ENCODE measurements at regions of chr14 and their contacts with region 1.

Region 1: DNA sequence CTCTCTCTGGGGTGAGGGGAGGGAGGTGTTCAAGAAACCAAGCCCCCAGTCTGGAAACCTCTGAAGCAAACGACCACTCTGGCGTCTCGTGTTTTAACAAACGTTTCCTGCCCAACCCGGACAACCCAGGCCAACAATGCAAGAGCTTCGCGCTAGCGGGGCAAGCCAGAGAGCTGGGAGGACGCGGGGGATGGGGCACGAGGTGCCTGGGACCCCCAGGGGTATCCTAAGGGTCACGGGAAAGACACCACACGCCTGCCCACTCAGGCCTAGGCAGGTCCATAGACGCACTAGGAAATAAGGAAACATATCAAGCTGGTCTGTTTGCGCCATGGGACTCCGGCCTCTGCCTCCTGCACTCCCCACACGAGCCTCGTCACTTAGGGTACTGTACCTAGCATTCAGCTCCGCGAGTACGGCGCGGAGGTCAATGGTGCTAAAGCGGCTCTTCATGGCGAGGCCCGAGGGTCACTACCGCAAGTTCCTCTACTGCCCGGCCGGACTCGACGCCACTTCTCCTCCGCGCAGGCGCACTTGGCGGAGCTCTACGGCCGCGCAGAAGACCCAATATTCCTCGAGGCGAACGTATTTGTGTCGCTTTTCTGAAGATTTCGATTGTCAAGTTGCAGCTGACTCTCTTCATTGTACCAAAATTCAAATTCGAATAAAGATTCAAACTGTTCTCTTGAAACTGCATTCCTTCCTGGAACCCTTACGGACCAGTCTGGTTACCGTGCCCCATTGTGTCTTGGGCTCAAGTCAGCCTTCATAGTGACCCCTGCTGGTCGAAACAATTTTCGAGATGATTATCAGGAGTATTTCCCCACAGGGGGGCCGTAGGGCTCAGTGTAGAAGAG is at the start of gene NEMF:
- DNase-seq: peak; percentile 49 to 92 (median 68)
- ATAC-seq: peak; percentile 75 to 83 (median 78)
- H3K4me3 ChIP-seq: peak within 1 kb of the TSS; percentile 79 to 96
- H3K4me3 Mint-ChIP-seq: peak within 1 kb of the TSS; percentile 98 to 100 (median 99)
- H3K27ac ChIP-seq: peak within 1 kb of the TSS; percentile 73
- H3K27ac Mint-ChIP-seq: peak within 1 kb of the TSS; percentile 96 to 97
- H3K4me1 ChIP-seq: peaks cover 11 to 19% of the 10 kb centered on the region in 2 experiments
- H3K4me1 Mint-ChIP-seq: peaks cover 43 to 55% (median 45%) of the 10 kb centered on the region in 3 donors
- H3K27me3 ChIP-seq: no peaks in the 10 kb centered on the region
- H3K27me3 Mint-ChIP-seq: no peaks in the 10 kb centered on the region
- total RNA-seq, gene NEMF: 73.0 to 106 (median 88.8) TPM

Region 2: GRCh38 chr14:49447540-49448107 is 404.9 kb before region 1 on chr14:
- CTCF ChIA-PET with region 1: no interaction called
- POLR2A ChIA-PET with region 1: no interaction called
- DNase-seq: no peak
- ATAC-seq: no peak
- H3K4me3 ChIP-seq: no peak overlapping the region
- H3K4me3 Mint-ChIP-seq: no peak overlapping the region
- H3K27ac ChIP-seq: no peak overlapping the region
- H3K27ac Mint-ChIP-seq: no peak overlapping the region
- H3K4me1 ChIP-seq: no peaks in the 10 kb centered on the region
- H3K4me1 Mint-ChIP-seq: no peaks in the 10 kb centered on the region
- H3K27me3 ChIP-seq: peaks cover 0 to 5% of the 10 kb centered on the region in 2 experiments
- H3K27me3 Mint-ChIP-seq: peaks cover 6 to 9% of the 10 kb centered on the region in 2 donors

Region 3: DNA sequence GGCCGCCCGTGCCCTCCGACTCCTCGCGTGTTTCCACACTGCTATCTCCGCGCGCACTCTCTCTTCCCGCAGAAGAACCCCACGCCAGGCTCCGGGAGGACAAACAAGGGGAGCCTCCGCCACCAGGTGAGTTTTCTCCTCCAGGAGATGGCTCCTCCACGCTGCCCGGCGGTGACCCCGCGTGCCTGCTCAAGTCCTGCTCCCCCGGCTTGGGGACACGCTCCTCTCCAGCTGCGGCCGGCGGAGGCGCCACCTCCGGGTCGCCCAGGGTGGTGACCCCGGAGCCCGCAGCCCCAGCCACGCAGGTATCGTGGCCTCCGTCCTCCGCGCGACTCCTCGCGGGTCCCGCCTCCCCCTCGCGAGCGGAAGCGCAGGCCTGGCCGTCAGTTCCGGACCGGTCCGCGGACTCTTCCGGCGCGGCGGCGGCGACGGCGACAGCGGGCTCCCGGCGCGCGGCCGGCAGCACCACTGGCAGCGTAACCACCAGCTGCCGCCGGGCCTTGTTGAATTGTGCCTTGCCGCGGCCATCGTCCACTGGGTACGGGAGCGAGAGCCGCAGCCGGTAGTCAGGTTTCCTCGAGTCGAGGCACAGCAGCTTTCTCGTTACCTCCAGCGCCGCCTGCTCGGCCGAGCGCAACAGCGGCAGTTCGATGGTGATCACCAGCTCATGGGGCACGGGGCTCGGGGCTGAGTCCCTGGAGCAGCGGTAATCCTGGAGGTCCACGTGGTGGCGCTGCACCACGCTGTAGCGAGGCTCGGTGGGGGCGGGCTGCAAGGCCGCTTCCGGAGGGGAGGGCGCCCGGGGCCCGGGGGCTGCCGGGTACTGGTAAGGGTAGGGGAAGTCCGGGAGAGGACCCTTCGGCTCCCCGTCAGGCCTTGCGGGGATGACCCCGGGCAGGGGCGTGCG is 218.6 kb before region 1 on chr14:
- CTCF ChIA-PET with region 1: interaction called in 1 of 2 experiments, 13 read pairs
- POLR2A ChIA-PET with region 1: interaction called, 3 read pairs
- DNase-seq: peak; percentile 83 to 96 (median 91)
- ATAC-seq: peak; percentile 84 to 88 (median 85)
- H3K4me3 ChIP-seq: peak overlapping the region; percentile 92 to 96
- H3K4me3 Mint-ChIP-seq: peak overlapping the region; percentile 95 to 99 (median 97)
- H3K27ac ChIP-seq: peak overlapping the region; percentile 98
- H3K27ac Mint-ChIP-seq: peak overlapping the region; percentile 92 to 94
- H3K4me1 ChIP-seq: peaks cover 4 to 41% of the 10 kb centered on the region in 2 experiments
- H3K4me1 Mint-ChIP-seq: peaks cover 48 to 68% (median 63%) of the 10 kb centered on the region in 3 donors
- H3K27me3 ChIP-seq: no peaks in the 10 kb centered on the region
- H3K27me3 Mint-ChIP-seq: no peaks in the 10 kb centered on the region

Region 4: DNA sequence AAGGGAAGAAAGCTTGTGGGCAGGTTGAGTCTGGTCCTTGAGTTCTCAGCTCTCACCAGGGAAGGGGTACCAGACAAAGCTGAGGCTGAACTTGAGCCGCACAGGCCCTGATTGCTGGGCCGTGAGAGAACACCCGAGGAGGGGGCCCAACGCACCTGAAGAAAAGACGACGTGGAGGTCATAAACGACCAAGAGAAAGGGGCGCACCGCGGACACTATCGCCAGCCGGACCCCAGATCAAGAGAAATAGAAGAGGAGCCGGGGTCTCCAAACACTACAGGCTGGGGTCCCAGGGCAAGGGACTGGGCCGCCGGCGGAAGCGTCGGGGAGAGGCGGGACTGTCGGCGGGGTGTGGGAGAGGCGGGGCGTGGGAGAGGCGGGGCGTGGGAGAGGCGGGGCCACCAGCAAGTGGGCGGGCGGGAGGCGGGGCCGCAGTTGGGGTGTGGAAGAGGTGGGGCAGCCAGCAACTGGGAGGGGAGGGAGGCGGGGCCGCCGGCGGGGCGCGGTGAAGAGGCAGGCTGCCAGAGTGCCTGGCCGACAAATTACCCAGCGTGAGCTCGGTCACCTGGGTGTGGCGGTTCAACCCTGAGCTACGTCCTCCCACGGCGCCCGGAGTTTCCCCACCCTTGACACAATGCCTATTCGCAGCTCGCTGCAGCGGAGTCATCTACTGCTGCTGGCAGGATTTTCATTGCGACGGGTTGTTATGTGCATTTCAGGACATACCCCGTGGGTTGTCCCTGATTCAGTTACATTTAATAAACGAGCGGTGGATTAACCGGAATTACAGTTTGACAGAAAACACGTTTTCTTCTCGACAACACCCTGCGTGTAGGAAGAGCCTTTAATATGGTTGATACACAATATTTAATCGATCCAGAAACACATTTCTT is 15.5 kb after region 1 on chr14:
- CTCF ChIA-PET with region 1: interaction called, 22 to 144 read pairs
- POLR2A ChIA-PET with region 1: interaction called, 13 to 33 read pairs
- DNase-seq: peak; percentile 91 to 98 (median 97)
- ATAC-seq: peak; percentile 89 to 94 (median 93)
- H3K4me3 ChIP-seq: peak overlapping the region; percentile 44 to 49
- H3K4me3 Mint-ChIP-seq: peak overlapping the region; percentile 84 to 87 (median 86)
- H3K27ac ChIP-seq: peak overlapping the region; percentile 85
- H3K27ac Mint-ChIP-seq: peak overlapping the region; percentile 97 to 98
- H3K4me1 ChIP-seq: peaks cover 21 to 35% of the 10 kb centered on the region in 2 experiments
- H3K4me1 Mint-ChIP-seq: peaks cover 12 to 28% (median 15%) of the 10 kb centered on the region in 3 donors
- H3K27me3 ChIP-seq: no peaks in the 10 kb centered on the region
- H3K27me3 Mint-ChIP-seq: no peaks in the 10 kb centered on the region

Region 5: DNA sequence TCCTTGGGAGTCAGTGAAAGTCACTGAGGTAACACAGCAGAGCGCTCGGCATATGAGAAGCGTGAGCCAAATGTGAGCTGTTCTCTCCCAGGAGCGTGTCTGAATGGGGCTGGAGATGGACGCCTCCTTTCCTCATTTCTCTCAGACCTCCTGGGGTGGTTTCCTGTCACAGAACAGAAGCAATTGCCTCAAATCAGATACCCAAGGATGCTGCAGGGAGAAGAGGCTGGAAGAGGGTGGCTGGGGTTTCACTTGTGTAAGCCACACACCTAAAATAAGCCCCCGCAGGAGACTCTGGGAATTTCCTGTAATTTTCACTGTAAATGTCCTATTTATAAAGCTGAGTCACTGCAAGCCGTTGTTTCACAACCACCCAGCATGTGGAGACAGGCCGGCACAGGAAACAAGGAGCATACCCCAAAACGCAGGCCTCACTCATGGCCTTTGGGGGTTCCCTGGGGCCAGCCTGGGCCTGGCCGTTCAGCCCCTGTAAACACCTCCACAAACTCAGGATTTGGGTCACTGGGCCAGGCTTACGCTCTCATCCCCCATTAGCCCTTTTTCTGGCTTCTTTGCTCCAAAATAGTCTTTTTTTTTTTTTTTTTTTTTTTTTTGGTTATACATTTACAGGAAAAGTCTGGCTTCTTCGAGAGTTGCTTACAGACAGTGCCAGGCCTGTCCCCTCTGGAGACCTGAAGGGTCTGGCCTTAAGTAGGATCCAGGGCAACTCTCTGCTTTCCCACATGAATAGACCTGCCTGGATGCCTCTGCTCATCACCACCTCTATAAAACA is 208.5 kb after region 1 on chr14:
- CTCF ChIA-PET with region 1: interaction called, 3 to 19 read pairs
- POLR2A ChIA-PET with region 1: interaction called in 1 of 2 experiments, 5 read pairs
- DNase-seq: peak in 9 of 35 experiments; percentile 11 to 66 (median 34)
- ATAC-seq: no peak
- H3K4me3 ChIP-seq: peak overlapping the region in 1 of 2 donors; percentile 41
- H3K4me3 Mint-ChIP-seq: peak overlapping the region; percentile 70 to 90 (median 88)
- H3K27ac ChIP-seq: peak overlapping the region; percentile 93
- H3K27ac Mint-ChIP-seq: peak overlapping the region; percentile 100
- H3K4me1 ChIP-seq: peaks cover 44 to 76% of the 10 kb centered on the region in 2 experiments
- H3K4me1 Mint-ChIP-seq: peaks cover 75 to 92% (median 82%) of the 10 kb centered on the region in 3 donors
- H3K27me3 ChIP-seq: no peaks in the 10 kb centered on the region
- H3K27me3 Mint-ChIP-seq: no peaks in the 10 kb centered on the region

Region 6: DNA sequence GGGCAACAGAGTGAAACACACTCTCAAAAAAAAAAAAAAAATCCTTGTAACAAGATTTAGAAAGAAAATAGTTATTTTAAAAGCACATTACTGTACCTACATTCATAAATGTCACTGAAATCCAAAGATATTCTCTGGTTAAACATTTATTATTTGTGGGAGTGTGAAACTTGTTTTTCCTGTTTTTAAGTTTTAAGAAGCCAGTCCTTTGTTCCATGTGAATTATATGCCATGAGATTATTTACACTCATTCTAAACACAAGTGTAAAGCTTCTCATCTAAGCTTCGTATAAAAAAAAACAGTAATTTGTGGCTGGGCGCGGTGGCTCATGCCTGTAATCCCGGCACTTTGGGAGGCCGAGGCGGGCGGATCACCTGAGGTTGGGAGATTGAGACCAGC is 248.9 kb after region 1 on chr14:
- CTCF ChIA-PET with region 1: interaction called, 8 to 22 read pairs
- POLR2A ChIA-PET with region 1: interaction called, 4 to 15 read pairs
- DNase-seq: no peak
- ATAC-seq: no peak
- H3K4me3 ChIP-seq: no peak overlapping the region
- H3K4me3 Mint-ChIP-seq: no peak overlapping the region
- H3K27ac ChIP-seq: no peak overlapping the region
- H3K27ac Mint-ChIP-seq: peak overlapping the region in 1 of 2 donors; percentile 86
- H3K4me1 ChIP-seq: peaks cover 33 to 51% of the 10 kb centered on the region in 2 experiments
- H3K4me1 Mint-ChIP-seq: peaks cover 53 to 70% (median 68%) of the 10 kb centered on the region in 3 donors
- H3K27me3 ChIP-seq: no peaks in the 10 kb centered on the region
- H3K27me3 Mint-ChIP-seq: no peaks in the 10 kb centered on the region

Measured in T-cell (primary cell).